ENCODE measurements at regions of chr7 and their contacts with region 1.

Region 1: DNA sequence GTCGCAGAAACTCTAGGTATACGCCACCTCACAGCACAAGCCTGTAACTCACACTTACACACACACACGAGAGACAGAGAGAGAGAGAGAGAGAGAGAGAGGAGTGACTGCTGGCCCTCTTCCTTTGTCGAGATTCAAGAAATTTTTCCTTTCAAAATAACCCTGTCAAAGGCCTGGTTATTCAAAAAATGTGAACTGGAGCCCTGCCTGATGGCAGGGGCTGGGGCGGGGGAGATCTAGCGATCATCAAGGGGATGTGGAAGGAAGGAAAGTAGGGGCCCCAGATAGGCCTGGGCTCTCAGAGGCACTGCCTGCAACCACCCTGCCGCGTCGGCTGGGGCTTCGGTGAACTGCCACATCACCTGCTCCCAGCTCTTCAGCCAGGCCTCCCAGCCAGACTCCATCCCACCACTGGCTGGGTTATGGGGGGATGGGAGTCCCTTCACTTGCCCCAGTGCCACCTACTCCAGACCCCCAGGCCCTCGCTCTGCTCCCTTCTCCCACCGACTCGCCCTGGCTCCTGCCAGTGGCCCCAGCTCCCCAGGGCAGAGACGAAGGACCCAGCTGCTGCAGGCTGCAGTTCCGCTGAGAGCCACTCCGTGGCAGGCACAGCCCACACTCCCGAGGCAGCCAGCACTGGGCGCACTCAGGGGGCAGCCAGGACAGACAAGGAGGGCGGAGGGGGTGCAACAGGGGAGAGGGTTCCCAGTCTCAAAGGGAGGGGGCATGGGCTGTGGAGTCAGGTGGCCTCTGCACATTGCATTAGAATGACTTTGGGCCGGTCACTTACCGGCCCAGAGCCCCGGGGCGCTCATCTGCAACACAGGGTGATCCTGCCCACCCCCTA is 15.3 kb downstream of the KCNH2 start:
- DNase-seq: peak; percentile 38 to 92
- ATAC-seq: peak; percentile 85 to 93
- H3K4me3 ChIP-seq: no peak overlapping the region
- H3K27ac ChIP-seq: no peak overlapping the region
- H3K4me1 ChIP-seq: no peaks in the 10 kb centered on the region
- CTCF ChIP-seq: peak; percentile 71
- EP300 ChIP-seq: no peak
- POLR2A ChIP-seq: no peak
- RAD21 ChIP-seq: peak; percentile 84 to 88

Region 2: DNA sequence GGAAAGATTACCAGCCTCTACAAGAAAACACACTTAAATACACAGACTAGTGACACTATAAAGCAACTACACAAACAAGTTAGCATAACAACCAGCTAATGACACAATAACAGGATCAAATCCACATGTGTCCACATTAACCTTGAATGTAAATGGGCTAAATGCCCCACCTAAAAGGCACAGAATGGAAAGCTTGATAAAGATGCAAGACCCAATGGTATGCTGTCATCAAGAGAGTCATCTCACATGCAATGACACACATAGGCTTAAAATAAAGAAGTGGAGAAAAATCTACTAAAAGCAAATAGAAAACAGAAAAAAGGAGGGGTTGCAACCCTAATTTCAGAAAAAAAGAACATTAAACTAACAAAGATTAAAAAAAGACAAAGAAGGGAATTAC is 409.6 kb before region 1 on chr7:
- CTCF ChIA-PET with region 1: no interaction called
- POLR2A ChIA-PET with region 1: no interaction called
- DNase-seq: no peak
- ATAC-seq: no peak
- H3K4me3 ChIP-seq: no peak overlapping the region
- H3K27ac ChIP-seq: no peak overlapping the region
- H3K4me1 ChIP-seq: no peaks in the 10 kb centered on the region
- CTCF ChIP-seq: no peak
- EP300 ChIP-seq: no peak
- POLR2A ChIP-seq: no peak
- RAD21 ChIP-seq: no peak

Region 3: GRCh38 chr7:150941981-150942590 is 20.7 kb before region 1 on chr7:
- CTCF ChIA-PET with region 1: interaction called, 18 read pairs
- POLR2A ChIA-PET with region 1: no interaction called
- DNase-seq: no peak
- ATAC-seq: peak in 1 of 2 experiments; percentile 9; a peak in 1 of 6 replicates
- H3K4me3 ChIP-seq: no peak overlapping the region
- H3K27ac ChIP-seq: no peak overlapping the region
- H3K4me1 ChIP-seq: no peaks in the 10 kb centered on the region
- CTCF ChIP-seq: no peak
- EP300 ChIP-seq: no peak
- POLR2A ChIP-seq: no peak
- RAD21 ChIP-seq: no peak

Region 4: DNA sequence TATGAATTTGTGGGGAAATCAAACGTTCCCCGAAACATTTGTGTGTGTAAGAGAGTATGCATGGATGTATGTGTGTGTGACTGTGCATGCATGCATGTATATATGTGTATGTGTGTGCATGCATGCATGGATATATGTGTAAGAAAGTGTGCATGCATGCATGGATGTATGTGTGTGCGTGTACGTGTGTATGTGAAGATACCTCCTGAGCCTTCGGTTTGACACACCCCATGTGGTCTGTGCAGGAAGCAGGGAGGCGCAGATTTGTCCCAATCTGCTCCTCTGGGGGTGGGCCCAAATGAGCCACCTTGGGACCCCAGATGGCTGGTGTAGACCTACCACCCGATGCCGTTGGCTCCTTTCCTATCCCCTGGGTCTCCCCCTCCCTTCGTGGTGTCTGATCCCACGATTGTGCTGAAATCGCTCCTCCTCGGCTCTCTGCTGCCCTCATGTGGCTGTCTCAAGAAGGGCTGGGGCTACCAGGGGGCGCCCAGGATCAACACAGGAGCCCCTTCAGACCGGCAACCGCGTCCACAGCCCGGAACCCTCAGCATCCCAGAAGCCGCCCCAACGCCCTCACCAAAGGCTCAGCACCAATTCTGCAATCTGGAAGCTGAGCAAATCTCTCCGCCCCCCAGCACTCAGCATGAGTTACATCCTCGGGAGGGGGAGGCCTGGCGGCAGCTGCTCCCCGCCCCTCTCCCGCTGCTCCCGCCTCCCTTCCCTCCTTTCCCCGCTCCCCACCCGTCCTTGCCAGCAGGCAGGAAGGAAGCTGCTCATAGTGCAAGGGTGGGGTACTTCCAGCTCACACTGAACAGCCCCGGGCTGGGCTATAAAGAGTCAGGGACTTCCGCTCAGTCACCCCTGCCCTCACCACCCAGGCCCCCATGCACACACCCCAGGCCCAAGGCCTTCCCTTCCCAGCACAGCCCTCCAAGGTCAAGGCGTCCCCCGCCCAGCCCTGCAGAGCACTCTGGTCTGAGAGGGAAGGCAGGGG is 25.8 kb after region 1 on chr7:
- CTCF ChIA-PET with region 1: interaction called, 95 read pairs
- POLR2A ChIA-PET with region 1: no interaction called
- DNase-seq: peak in 1 of 2 experiments; percentile 36
- ATAC-seq: peak; percentile 5 to 69; a peak in 4 of 6 replicates
- H3K4me3 ChIP-seq: no peak overlapping the region
- H3K27ac ChIP-seq: no peak overlapping the region
- H3K4me1 ChIP-seq: no peaks in the 10 kb centered on the region
- CTCF ChIP-seq: peak; percentile 62
- EP300 ChIP-seq: no peak
- POLR2A ChIP-seq: no peak
- RAD21 ChIP-seq: peak; percentile 64 to 77

Region 5: GRCh38 chr7:151003572-151003971 is 40.8 kb after region 1 on chr7:
- CTCF ChIA-PET with region 1: interaction called, 36 read pairs
- POLR2A ChIA-PET with region 1: no interaction called
- DNase-seq: peak in 1 of 2 experiments; percentile 40
- ATAC-seq: peak; percentile 37 to 40; a peak in 4 of 6 replicates
- H3K4me3 ChIP-seq: no peak overlapping the region
- H3K27ac ChIP-seq: no peak overlapping the region
- H3K4me1 ChIP-seq: 0 out of 3 replicates have a peak, but pooled peaks cover 5% of the 10 kb centered on the region
- CTCF ChIP-seq: no peak
- EP300 ChIP-seq: no peak
- POLR2A ChIP-seq: no peak
- RAD21 ChIP-seq: no peak

Region 6: DNA sequence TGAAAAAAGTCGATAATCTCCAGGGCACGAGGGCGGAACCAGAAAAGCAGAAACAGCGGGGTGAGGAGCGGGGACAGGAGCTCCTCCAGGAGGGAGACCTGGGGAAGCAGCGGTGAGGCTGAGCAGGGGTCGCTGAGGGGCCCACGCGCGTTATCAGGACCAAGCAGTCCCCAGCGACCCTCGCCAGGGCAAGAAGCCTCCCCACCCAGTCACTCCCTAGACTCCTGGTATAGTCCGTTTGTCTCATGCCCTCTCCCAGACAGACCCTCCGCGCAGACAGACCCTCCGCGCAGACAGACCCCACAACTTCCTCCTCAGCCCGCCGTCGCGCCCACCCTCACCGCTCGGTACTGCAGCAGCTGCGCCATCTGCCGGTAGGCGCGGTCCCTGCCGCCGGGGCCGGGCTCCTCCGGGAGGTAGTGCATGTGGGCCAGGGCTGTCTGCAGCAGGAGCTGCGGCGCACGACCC is 55.2 kb after region 1 on chr7:
- CTCF ChIA-PET with region 1: interaction called, 34 read pairs
- POLR2A ChIA-PET with region 1: no interaction called
- DNase-seq: peak; percentile 55 to 71
- ATAC-seq: peak; percentile 72 to 94
- H3K4me3 ChIP-seq: peak overlapping the region; percentile 30; the same call in 2 of the 3 replicates
- H3K27ac ChIP-seq: peak overlapping the region in 1 of 2 experiments; percentile 75; a peak in 2 of 6 replicates
- H3K4me1 ChIP-seq: peaks cover 6% of the 10 kb centered on the region; the same call in 2 of the 3 replicates
- CTCF ChIP-seq: peak; percentile 88
- EP300 ChIP-seq: no peak
- POLR2A ChIP-seq: no peak
- RAD21 ChIP-seq: peak; percentile 58 to 64

Region 7: GRCh38 chr7:151088856-151089699 is 126.3 kb after region 1 on chr7:
- CTCF ChIA-PET with region 1: no interaction called
- POLR2A ChIA-PET with region 1: no interaction called
- DNase-seq: no peak
- ATAC-seq: no peak
- H3K4me3 ChIP-seq: no peak overlapping the region
- H3K27ac ChIP-seq: peak overlapping the region in 1 of 2 experiments; percentile 98; a peak in 3 of 6 replicates
- H3K4me1 ChIP-seq: peaks cover 29% of the 10 kb centered on the region
- CTCF ChIP-seq: no peak
- EP300 ChIP-seq: no peak
- POLR2A ChIP-seq: no peak
- RAD21 ChIP-seq: no peak

Region 8: DNA sequence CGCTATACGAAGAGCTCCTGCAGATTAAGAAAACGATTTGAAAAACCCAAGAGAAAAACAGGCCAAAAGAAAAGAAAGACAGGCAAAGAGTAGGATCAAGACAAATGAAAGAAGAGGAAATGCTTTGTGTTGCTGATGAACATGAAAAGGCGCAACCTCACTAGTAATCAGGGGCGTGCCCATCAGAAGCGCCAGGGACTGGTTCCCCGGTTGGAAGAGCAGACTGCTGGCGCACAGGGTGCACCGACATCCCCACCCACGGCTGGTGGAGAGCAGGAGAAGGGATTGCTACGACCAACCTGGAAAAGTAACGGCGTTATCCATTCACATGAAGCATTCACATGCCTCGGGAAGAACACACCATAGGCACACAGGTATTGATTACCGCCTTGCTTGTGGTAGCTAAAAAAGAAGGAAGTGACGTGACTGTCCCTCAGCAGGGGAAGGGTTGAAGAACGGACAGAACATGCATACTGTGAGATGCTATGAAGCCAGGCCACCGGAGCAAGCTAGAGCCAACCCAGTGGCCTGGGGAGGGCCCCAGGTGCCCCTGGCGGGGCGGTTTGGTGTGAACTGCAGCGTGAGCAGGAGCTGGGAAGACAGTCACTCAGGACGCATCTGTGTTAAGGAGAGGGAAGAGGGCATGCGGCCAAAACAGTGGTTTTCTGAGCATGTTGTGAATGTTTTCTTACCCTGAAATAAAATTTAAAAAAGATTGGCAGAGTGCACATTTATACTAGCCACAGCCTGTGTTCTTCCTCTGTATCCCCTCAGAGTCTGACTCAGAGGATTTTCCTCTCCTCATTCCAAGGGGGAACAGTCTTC is 141.8 kb after region 1 on chr7:
- CTCF ChIA-PET with region 1: interaction called, 50 read pairs
- POLR2A ChIA-PET with region 1: no interaction called
- DNase-seq: no peak
- ATAC-seq: no peak
- H3K4me3 ChIP-seq: no peak overlapping the region
- H3K27ac ChIP-seq: no peak overlapping the region
- H3K4me1 ChIP-seq: peaks cover 4% of the 10 kb centered on the region; the same call in 2 of the 3 replicates
- CTCF ChIP-seq: no peak
- EP300 ChIP-seq: no peak
- POLR2A ChIP-seq: no peak
- RAD21 ChIP-seq: no peak